ENCODE measurements at regions of chr1 and their contacts with region 1.

Region 1: DNA sequence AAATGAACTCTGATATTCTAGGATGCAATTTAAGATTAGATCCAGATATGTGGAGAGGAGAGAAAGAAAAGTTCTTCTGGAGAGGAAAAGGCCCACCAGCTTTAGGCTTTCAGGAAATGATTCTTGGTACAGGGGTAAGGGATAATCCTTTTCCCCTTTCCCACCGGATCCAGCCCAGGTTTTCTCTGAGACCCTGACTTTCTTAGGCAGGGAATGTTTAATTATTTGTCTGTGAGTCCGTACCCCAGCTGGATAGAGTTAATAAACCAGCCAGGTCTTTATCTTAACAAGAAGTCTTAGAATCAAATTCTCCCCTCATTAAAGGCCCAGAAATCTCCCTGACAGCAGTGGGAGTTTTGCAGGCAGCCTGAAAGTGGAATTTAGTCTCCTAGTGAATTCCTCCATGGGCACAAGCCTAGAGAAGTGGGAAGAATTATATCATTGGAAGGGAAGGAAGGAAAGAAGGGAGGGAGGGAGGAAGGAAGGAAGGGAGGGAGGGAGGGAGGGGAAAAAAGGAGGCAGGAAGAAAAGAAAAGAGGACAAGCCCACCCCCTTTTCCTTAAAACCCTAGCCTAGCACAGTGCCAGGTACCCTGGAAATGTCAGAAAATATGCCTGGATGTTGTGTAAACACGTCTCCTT is 189.0 kb downstream of the PLPP3 start:
- DNase-seq: no peak
- ATAC-seq: no peak
- H3K4me3 ChIP-seq: no peak overlapping the region
- H3K27ac ChIP-seq: peak overlapping the region in 1 of 12 donors; percentile 7
- H3K4me1 ChIP-seq: peaks cover 0 to 25% (median 0%) of the 10 kb centered on the region in 12 donors
- H3K27me3 ChIP-seq: no peaks in the 10 kb centered on the region
- CTCF ChIP-seq: no peak
- POLR2A ChIP-seq: no peak

Region 2: GRCh38 chr1:56064705-56065104 is 325.6 kb before region 1 on chr1:
- intact Hi-C with region 1: loop called in 1 of 10 experiments (anchors 10 kb)
- DNase-seq: no peak
- ATAC-seq: peak in 3 of 4 donors; percentile 36 to 68 (median 65)
- H3K4me3 ChIP-seq: no peak overlapping the region
- H3K27ac ChIP-seq: no peak overlapping the region
- H3K4me1 ChIP-seq: peaks cover 0 to 8% (median 0%) of the 10 kb centered on the region in 12 donors
- H3K27me3 ChIP-seq: no peaks in the 10 kb centered on the region
- CTCF ChIP-seq: no peak
- POLR2A ChIP-seq: no peak

Region 3: DNA sequence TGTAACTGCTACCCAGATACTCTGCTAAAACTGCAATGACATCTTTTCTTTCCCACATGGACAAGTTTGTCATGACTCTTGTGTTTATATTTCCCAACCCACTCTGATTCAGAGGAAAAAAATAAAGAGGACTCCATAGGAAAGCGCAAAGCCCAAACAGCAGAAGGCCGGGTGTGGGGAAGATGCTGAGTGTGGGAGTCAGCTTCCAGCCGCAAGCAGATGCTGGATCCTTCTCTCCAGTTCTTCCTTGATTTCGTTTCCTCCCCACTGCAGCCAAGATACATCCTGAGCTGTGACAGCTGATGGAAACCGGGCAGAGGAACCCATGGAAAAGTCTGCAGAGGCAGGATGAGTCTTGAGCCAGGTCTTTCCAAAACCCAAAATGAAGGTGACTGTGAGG is 309.2 kb before region 1 on chr1:
- intact Hi-C with region 1: loop called in 1 of 10 experiments (anchors 10 kb)
- DNase-seq: peak in 4 of 5 donors; percentile 50 to 76 (median 60)
- ATAC-seq: peak; percentile 77 to 89 (median 86)
- H3K4me3 ChIP-seq: no peak overlapping the region
- H3K27ac ChIP-seq: peak overlapping the region in 6 of 12 donors; percentile 30 to 70 (median 52)
- H3K4me1 ChIP-seq: peaks cover 0 to 15% (median 3%) of the 10 kb centered on the region in 12 donors
- H3K27me3 ChIP-seq: no peaks in the 10 kb centered on the region
- CTCF ChIP-seq: no peak
- POLR2A ChIP-seq: no peak

Region 4: GRCh38 chr1:56461158-56462127 is 71.1 kb after region 1 on chr1:
- intact Hi-C with region 1: no loop called
- DNase-seq: no peak
- ATAC-seq: no peak
- H3K4me3 ChIP-seq: no peak overlapping the region
- H3K27ac ChIP-seq: no peak overlapping the region
- H3K4me1 ChIP-seq: peaks cover 0 to 15% (median 3%) of the 10 kb centered on the region in 12 donors
- H3K27me3 ChIP-seq: no peaks in the 10 kb centered on the region
- CTCF ChIP-seq: no peak
- POLR2A ChIP-seq: no peak

Measured in heart left ventricle (tissue), 16 donors.